Activated CD4-positive, alpha-beta T cell treated with anti-CD3 and anti-CD28 coated beads for 36 hours (primary cell): ENCODE measurements at regions of chr17 and their contacts with region 1.

Region 1: GRCh38 chr17:8894673-8895578 is 27.5 kb upstream of the PIK3R6 start:
- DNase-seq: peak; percentile 73
- ATAC-seq: peak; percentile 39
- H3K4me3 Mint-ChIP-seq: no peak overlapping the region
- H3K27ac Mint-ChIP-seq: peak overlapping the region; percentile 20
- H3K4me1 Mint-ChIP-seq: peaks cover 68% of the 10 kb centered on the region
- H3K27me3 Mint-ChIP-seq: no peaks in the 10 kb centered on the region

Region 2: DNA sequence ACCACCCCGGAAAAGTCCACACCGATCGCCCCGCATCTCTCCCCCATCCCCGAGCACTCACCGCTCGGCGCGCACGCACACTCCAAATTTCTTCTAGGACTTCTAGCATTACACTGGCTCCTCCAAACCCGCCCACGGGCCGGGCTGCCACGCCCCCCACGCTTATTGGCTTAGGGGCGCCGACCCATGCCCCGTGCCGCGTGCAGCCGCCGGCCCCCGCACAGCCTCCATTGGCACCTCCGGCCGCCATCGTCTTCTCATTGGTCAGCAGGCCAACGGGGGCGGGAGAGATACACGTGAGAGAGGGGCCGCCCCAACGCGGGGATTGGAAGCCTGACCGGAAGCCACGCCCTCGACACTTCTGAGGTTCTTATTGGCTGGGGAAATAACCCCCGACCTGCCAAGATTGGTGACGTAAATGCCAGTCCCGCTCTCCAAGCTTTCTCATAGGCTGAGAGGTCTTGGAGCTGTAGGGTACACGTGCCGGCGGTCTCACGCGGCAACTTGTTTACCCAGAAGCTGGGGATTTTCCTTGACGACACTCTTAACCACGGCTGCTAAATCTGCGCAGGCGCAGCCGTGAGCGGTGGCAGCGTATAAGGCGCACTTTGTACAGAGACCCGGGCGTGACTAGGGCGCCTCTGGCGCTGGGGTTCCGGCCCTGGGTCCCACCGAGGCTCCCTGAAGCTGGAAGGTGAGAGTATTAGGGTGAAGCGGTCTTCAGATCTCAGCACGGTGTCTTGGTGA is 738.5 kb before region 1 on chr17:
- CTCF ChIA-PET with region 1: no interaction called
- POLR2A ChIA-PET with region 1: no interaction called
- intact Hi-C with region 1: no loop called
- DNase-seq: peak; percentile 100
- ATAC-seq: peak; percentile 75
- H3K4me3 Mint-ChIP-seq: no peak overlapping the region
- H3K27ac Mint-ChIP-seq: no peak overlapping the region
- H3K4me1 Mint-ChIP-seq: peaks cover 49% of the 10 kb centered on the region
- H3K27me3 Mint-ChIP-seq: no peaks in the 10 kb centered on the region

Region 3: DNA sequence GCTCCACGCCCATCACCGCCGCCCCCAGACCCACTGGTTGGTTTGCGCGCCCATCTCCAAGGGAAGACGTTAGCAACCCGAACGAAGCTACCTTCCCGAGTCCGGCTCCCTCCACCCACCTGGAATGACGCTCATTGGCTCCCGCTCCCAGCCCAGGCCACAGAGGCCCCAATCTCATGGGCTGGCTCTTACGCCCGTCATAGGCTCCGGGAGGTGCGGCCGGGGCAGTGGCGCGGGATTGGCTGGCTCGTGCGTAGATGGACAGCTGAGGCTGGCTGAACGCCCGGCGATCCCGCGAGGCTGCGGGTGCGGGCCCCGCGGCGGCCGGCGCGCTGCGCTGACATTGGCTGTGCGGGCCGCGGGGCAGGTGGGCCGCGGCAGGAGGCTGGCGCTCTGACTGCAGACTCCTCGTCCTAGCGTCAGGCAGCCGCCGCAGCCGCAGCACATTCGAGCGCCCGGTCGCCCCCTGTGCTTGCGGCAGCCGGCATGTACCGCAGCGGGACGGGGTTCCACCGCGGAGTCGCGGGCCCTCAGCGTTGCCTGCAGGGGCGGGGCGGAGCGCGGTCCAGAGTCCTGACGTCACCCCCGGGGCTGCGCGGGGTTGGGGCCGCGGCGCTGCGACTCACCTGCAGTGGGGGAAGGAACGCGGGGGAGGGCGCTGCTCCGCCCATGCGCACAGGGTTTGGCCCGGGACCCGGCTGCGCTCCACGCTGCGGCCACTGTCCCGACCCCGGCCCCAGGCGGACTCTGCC is 263.9 kb before region 1 on chr17:
- CTCF ChIA-PET with region 1: interaction called, 3 read pairs
- POLR2A ChIA-PET with region 1: no interaction called
- intact Hi-C with region 1: loop called in 1 of 2 experiments (anchors 5 kb)
- DNase-seq: peak; percentile 96
- ATAC-seq: peak; percentile 98
- H3K4me3 Mint-ChIP-seq: peak overlapping the region; percentile 87
- H3K27ac Mint-ChIP-seq: no peak overlapping the region
- H3K4me1 Mint-ChIP-seq: peaks cover 4% of the 10 kb centered on the region
- H3K27me3 Mint-ChIP-seq: peaks cover 33% of the 10 kb centered on the region

Region 4: DNA sequence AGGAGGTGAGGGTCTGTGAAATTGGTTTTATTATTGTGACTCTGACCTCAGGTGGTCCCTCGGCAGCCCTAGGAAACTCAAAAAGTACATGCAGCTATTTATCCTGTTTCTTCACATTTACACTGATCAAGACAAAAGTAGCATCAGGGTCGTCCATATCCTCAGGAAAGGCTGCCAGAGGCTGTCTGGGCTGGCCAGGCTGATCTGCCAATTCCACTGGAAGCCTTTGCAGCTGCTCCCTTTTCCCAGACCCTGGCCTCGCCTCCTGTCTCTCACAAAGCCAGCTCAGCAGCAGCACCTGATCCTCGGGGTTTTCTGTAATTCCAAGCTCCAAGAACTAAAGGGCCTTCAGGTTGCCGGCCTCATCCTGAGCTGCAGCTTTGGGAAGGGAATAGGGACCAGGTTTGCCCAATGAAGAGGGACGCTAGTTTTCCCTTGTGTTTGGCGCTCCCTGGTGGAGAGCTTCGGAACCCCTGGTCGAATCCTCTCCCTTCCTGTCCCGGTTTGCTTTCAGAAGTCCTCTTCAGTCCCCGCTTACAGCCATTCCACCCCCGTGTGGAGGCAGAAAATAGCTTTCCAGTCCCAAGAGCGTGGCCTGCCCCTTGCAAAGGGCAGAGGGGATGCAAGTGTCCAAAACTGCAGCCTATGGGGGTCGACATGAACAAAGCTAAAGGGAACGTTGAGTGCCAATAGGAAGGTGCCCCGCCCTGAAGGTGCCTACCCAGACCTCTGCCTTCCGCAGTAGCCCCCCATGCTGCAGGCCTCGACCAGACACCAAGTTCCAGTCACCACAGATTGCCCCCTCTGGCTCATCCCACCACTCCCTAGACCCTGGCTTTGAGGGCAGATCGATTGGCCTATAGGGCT is 109.1 kb before region 1 on chr17:
- CTCF ChIA-PET with region 1: interaction called, 13 read pairs
- POLR2A ChIA-PET with region 1: no interaction called
- intact Hi-C with region 1: no loop called
- DNase-seq: peak; percentile 79
- ATAC-seq: peak; percentile 61
- H3K4me3 Mint-ChIP-seq: no peak overlapping the region
- H3K27ac Mint-ChIP-seq: no peak overlapping the region
- H3K4me1 Mint-ChIP-seq: no peaks in the 10 kb centered on the region
- H3K27me3 Mint-ChIP-seq: peaks cover 6% of the 10 kb centered on the region

Region 5: GRCh38 chr17:8857919-8858318 is 37.0 kb before region 1 on chr17:
- CTCF ChIA-PET with region 1: interaction called, 3 read pairs
- POLR2A ChIA-PET with region 1: no interaction called
- intact Hi-C with region 1: loop called (anchors 1 to 5 kb)
- DNase-seq: peak; percentile 81
- ATAC-seq: peak; percentile 70
- H3K4me3 Mint-ChIP-seq: peak overlapping the region; percentile 6
- H3K27ac Mint-ChIP-seq: peak overlapping the region; percentile 80
- H3K4me1 Mint-ChIP-seq: peaks cover 54% of the 10 kb centered on the region
- H3K27me3 Mint-ChIP-seq: no peaks in the 10 kb centered on the region

Region 6: GRCh38 chr17:8954339-8954738 is 59.4 kb after region 1 on chr17:
- CTCF ChIA-PET with region 1: interaction called, 4 read pairs
- POLR2A ChIA-PET with region 1: no interaction called
- intact Hi-C with region 1: loop called in 1 of 2 experiments (anchors 2 kb)
- DNase-seq: peak; percentile 85
- ATAC-seq: peak; percentile 73
- H3K4me3 Mint-ChIP-seq: peak overlapping the region; percentile 2
- H3K27ac Mint-ChIP-seq: peak overlapping the region; percentile 86
- H3K4me1 Mint-ChIP-seq: peaks cover 95% of the 10 kb centered on the region
- H3K27me3 Mint-ChIP-seq: no peaks in the 10 kb centered on the region

Region 7: DNA sequence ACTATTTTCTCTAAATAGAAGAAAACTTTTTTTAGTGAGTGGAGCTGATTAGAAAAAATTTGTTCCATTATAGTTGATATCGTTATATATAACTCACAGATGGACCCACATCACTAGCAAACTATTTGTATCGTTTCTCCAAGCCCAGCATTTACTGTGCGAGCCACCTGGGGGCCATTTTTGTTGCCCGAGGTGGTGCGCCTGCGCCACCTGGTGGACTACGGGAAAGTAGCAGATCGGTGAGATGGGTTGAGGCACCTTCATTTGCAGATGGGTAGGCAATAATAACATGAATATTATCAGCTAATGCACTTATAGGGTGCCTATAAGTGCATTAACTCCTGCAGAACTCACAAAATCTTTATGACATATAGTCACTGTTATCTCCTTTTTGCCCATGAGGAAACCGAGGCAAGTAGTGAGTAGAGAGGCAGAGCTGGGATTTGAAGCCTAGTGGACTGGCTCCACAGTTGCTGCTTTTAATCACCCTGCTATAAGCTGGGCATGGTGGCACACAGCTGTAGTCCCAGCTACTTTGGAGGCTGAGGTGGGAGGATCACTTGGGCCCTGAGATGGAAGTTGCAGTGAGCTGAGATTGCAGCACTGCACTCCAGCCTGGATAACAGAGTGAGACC is 103.2 kb after region 1 on chr17:
- CTCF ChIA-PET with region 1: interaction called, 11 read pairs
- POLR2A ChIA-PET with region 1: no interaction called
- intact Hi-C with region 1: loop called in 1 of 2 experiments (anchors 1 kb)
- DNase-seq: peak; percentile 89
- ATAC-seq: peak; percentile 73
- H3K4me3 Mint-ChIP-seq: no peak overlapping the region
- H3K27ac Mint-ChIP-seq: no peak overlapping the region
- H3K4me1 Mint-ChIP-seq: peaks cover 9% of the 10 kb centered on the region
- H3K27me3 Mint-ChIP-seq: peaks cover 24% of the 10 kb centered on the region

Region 8: GRCh38 chr17:9307292-9308042 is 412.5 kb after region 1 on chr17:
- CTCF ChIA-PET with region 1: no interaction called
- POLR2A ChIA-PET with region 1: no interaction called
- intact Hi-C with region 1: no loop called
- DNase-seq: no peak
- ATAC-seq: no peak
- H3K4me3 Mint-ChIP-seq: no peak overlapping the region
- H3K27ac Mint-ChIP-seq: no peak overlapping the region
- H3K4me1 Mint-ChIP-seq: no peaks in the 10 kb centered on the region
- H3K27me3 Mint-ChIP-seq: no peaks in the 10 kb centered on the region

Region 9: DNA sequence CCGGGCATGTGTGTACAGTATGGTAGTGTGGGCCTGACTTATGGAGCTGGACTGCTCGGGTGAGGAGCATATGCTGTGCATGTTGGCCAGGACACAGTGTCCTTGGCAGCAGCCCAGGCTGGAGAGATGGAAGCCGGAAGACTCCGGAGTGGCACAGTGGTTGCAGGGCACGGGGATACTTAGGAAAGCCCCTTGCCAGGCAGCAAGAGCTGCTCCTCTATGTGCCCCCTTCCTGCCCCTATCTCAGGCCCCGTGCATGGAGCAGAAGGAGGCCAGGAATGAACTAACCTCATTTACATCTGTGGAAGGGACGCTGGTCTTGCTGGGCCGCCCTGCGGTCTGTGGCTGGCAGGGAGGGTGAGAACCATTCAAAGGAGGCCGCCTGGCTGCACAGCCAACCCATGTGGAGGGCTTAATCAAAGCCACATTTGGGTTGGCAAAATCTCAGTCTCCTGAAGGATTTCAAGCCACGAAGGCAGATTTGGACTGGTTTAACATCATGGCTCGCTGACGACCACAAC is 1042.4 kb after region 1 on chr17:
- CTCF ChIA-PET with region 1: no interaction called
- POLR2A ChIA-PET with region 1: no interaction called
- intact Hi-C with region 1: no loop called
- DNase-seq: no peak
- ATAC-seq: no peak
- H3K4me3 Mint-ChIP-seq: no peak overlapping the region
- H3K27ac Mint-ChIP-seq: no peak overlapping the region
- H3K4me1 Mint-ChIP-seq: no peaks in the 10 kb centered on the region
- H3K27me3 Mint-ChIP-seq: no peaks in the 10 kb centered on the region